Ovary (tissue), 10 donors: ENCODE measurements at regions of chr12 and their contacts with region 1.

Region 1: DNA sequence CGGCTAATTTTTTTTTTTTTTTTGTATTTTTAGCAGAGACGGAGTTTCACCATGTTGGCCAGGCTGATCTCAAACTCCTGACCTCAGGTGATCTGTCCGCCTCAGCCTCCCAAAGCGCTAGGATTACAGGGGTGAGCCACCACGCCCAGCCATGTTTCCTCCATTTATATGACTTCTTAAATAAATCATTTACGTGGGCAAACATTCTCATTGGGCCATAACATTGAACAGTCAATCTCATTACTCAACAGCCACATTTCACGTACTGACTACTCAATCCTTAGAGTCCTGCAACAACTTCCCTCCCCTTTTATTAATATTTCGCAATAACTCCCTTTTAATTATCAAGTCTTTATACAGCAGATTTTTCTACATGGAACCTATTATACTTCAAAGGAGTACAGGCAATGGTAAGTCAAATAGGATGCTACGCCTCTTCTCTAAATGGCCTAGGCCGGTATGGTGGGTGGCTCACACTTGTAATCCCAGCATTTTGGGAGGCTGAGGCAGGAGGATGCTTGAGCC is 7.4 kb upstream of the CSRNP2 start:
- DNase-seq: no peak
- H3K4me3 ChIP-seq: no peak overlapping the region
- H3K27ac ChIP-seq: no peak overlapping the region
- H3K4me1 ChIP-seq: no peaks in the 10 kb centered on the region
- H3K27me3 ChIP-seq: no peaks in the 10 kb centered on the region
- CTCF ChIP-seq: no peak
- EP300 ChIP-seq: no peak
- POLR2A ChIP-seq: no peak

Region 2: DNA sequence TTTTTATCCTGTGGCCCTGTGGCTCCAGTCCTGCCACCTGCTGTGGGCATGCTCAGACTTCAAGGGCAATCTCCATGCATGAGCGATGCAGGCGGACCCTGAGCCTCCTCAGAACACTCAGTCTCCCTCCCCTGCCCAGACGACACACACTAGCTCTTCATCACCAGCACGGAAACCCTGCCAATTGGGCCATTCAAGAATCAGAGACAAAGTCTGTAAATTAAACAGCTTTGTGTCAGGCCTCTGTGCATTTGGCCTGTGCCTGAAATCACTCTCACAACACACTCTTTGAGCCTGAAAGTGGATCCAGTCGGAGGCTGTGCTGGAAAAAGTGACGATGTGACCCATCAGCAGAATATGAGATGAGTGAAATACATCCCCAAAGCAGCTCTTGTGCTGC is 114.6 kb after region 1 on chr12:
- intact Hi-C with region 1: loop called in 1 of 4 experiments (anchors 10 kb)
- DNase-seq: no peak
- H3K4me3 ChIP-seq: no peak overlapping the region
- H3K27ac ChIP-seq: no peak overlapping the region
- H3K4me1 ChIP-seq: no peaks in the 10 kb centered on the region
- H3K27me3 ChIP-seq: no peaks in the 10 kb centered on the region
- CTCF ChIP-seq: no peak
- EP300 ChIP-seq: no peak
- POLR2A ChIP-seq: no peak